Right lobe of liver (tissue), 6 donors: ENCODE measurements at regions of chr16 and their contacts with region 1.

Region 1: GRCh38 chr16:31430380-31431052 is 2.4 kb upstream of the COX6A2 start:
- DNase-seq: no peak
- ATAC-seq: no peak
- H3K4me3 ChIP-seq: no peak overlapping the region
- H3K27ac ChIP-seq: no peak overlapping the region
- H3K4me1 ChIP-seq: peaks cover 0 to 4% (median 2%) of the 10 kb centered on the region in 4 donors
- H3K27me3 ChIP-seq: no peaks in the 10 kb centered on the region
- CTCF ChIP-seq: no peak
- POLR2A ChIP-seq: no peak

Region 2: DNA sequence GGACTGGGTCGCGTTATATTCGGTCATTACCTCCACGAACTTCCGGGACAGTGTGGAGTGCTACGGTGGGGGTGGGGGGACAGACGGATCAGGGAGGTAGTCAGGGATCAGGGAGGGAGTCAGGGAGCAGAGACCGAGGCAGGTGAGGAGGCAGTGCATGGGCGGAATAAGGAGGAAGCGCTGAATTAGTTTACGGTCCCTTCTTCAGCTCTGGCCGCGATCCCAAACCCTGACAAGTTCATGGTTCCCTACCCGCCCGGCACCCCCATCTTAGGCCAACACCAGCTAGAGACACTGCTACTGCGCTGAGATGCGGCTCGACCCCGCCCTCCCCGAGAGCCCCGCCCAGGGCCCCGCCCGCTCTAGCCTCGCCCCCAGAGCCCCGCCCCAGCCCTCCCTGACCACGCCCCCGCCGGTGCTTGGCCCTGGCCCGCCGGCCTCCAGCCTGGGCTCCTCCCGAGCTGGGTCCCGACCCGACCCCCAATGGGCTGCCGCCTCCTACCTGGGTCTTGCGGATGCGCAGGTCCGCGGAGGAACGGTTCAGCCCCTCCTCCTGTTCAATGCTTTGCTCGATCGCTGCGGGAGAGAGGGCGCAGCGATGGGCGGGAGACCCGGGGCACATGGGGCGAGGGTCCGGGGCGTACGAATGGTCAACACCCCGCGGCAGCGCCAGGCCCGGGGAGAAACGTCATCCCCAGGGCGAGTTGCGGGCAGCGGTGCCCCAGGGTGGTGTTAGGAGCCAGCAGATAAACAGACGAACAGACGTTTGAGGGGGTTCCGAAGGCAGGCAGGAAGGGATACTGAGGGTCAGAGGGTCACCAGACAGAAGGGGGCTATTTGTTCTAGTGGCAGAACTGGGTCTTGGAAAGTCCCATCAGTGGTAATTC is 433.3 kb before region 1 on chr16:
- intact Hi-C with region 1: loop called in 1 of 2 experiments (anchors 10 kb)
- DNase-seq: peak; percentile 94 to 95 (median 95)
- ATAC-seq: peak; percentile 82 to 94 (median 86)
- H3K4me3 ChIP-seq: peak overlapping the region; percentile 58 to 69 (median 69)
- H3K27ac ChIP-seq: peak overlapping the region; percentile 95 to 99 (median 97)
- H3K4me1 ChIP-seq: peaks cover 0 to 59% (median 20%) of the 10 kb centered on the region in 4 donors
- H3K27me3 ChIP-seq: no peaks in the 10 kb centered on the region
- CTCF ChIP-seq: no peak
- POLR2A ChIP-seq: peak; percentile 90

Region 3: GRCh38 chr16:31502981-31503380 is 72.5 kb after region 1 on chr16:
- intact Hi-C with region 1: no loop called
- DNase-seq: no peak
- ATAC-seq: no peak
- H3K4me3 ChIP-seq: no peak overlapping the region
- H3K27ac ChIP-seq: peak overlapping the region in 2 of 3 donors; percentile 72 to 83
- H3K4me1 ChIP-seq: peaks cover 0 to 50% (median 22%) of the 10 kb centered on the region in 4 donors
- H3K27me3 ChIP-seq: no peaks in the 10 kb centered on the region
- CTCF ChIP-seq: no peak
- POLR2A ChIP-seq: no peak